PC-3 (cell line): ENCODE measurements at regions of chr18 and their contacts with region 1.

Region 1: GRCh38 chr18:26621161-26622026 is 73.0 kb upstream of the KCTD1 start:
- DNase-seq: peak; percentile 79
- ATAC-seq: peak; percentile 83
- H3K4me3 ChIP-seq: peak overlapping the region; percentile 67
- H3K27ac ChIP-seq: no peak overlapping the region
- H3K4me1 ChIP-seq: peaks cover 19% of the 10 kb centered on the region
- H3K27me3 ChIP-seq: no peaks in the 10 kb centered on the region
- CTCF ChIP-seq: peak; percentile 83

Region 2: GRCh38 chr18:26548429-26549262 is 72.7 kb before region 1 on chr18 and contains the start of gene KCTD1:
- CTCF ChIA-PET with region 1: interaction called, 5 read pairs
- POLR2A ChIA-PET with region 1: no interaction called
- intact Hi-C with region 1: loop called (anchors 2 kb)
- DNase-seq: peak; percentile 80
- ATAC-seq: peak; percentile 37
- H3K4me3 ChIP-seq: peak within 1 kb of the TSS; percentile 85
- H3K27ac ChIP-seq: peak within 1 kb of the TSS; percentile 12; the same call in 1 of the 2 replicates
- H3K4me1 ChIP-seq: peaks cover 45% of the 10 kb centered on the region
- H3K27me3 ChIP-seq: no peaks in the 10 kb centered on the region
- CTCF ChIP-seq: no peak
- total RNA-seq, gene KCTD1: 15.8 and 24.0 TPM in 2 replicates

Region 3: GRCh38 chr18:26650310-26651268 is 29.2 kb after region 1 on chr18:
- CTCF ChIA-PET with region 1: interaction called, 6 read pairs
- POLR2A ChIA-PET with region 1: no interaction called
- intact Hi-C with region 1: loop called (anchors 1 kb)
- DNase-seq: no peak
- ATAC-seq: no peak
- H3K4me3 ChIP-seq: no peak overlapping the region
- H3K27ac ChIP-seq: no peak overlapping the region
- H3K4me1 ChIP-seq: peaks cover 2% of the 10 kb centered on the region
- H3K27me3 ChIP-seq: peaks cover 11% of the 10 kb centered on the region
- CTCF ChIP-seq: no peak

Region 4: DNA sequence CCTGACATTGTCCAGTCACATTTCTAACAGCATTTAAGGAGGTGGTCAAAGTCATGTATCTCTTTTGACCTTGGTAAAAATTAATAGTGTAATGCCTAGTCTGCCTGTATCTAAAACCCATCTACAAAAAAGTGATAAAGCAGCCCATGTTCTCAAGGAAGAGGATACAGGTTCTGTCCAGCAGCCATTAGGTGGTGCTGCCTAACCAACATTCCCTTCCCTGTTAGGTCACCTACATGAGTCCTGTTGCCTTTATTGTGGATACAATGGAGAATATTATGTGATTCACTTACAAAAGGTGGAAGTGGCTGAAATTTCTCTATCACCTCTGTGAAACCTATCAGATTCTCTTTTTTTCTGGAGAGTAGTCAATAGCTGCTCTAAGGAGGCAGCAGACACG is 191.6 kb after region 1 on chr18:
- CTCF ChIA-PET with region 1: no interaction called
- POLR2A ChIA-PET with region 1: no interaction called
- intact Hi-C with region 1: loop called (anchors 1 kb)
- DNase-seq: peak; percentile 58
- ATAC-seq: peak; percentile 91
- H3K4me3 ChIP-seq: no peak overlapping the region
- H3K27ac ChIP-seq: no peak overlapping the region
- H3K4me1 ChIP-seq: no peaks in the 10 kb centered on the region
- H3K27me3 ChIP-seq: peaks cover 14% of the 10 kb centered on the region; the same call in 1 of the 2 replicates
- CTCF ChIP-seq: peak; percentile 69

Region 5: GRCh38 chr18:27005589-27005988 is 384.2 kb after region 1 on chr18:
- CTCF ChIA-PET with region 1: no interaction called
- POLR2A ChIA-PET with region 1: no interaction called
- intact Hi-C with region 1: loop called (anchors 1 kb)
- DNase-seq: peak; percentile 44
- ATAC-seq: peak; percentile 69
- H3K4me3 ChIP-seq: no peak overlapping the region
- H3K27ac ChIP-seq: no peak overlapping the region
- H3K4me1 ChIP-seq: no peaks in the 10 kb centered on the region
- H3K27me3 ChIP-seq: peaks cover 36% of the 10 kb centered on the region
- CTCF ChIP-seq: peak; percentile 62